ENCODE measurements at regions of chr14 and their contacts with region 1.

Region 1: GRCh38 chr14:50773632-50774541 is 57.1 kb downstream of the NIN start:
- DNase-seq: peak; percentile 33 to 63
- ATAC-seq: peak; percentile 88 to 93
- H3K4me3 ChIP-seq: no peak overlapping the region
- H3K27ac ChIP-seq: no peak overlapping the region
- H3K4me1 ChIP-seq: peaks cover 5% of the 10 kb centered on the region; the same call in 1 of the 3 replicates
- CTCF ChIP-seq: peak; percentile 74
- EP300 ChIP-seq: no peak
- POLR2A ChIP-seq: no peak
- RAD21 ChIP-seq: peak; percentile 73 to 84

Region 2: GRCh38 chr14:50599700-50600444 is 174.0 kb before region 1 on chr14:
- CTCF ChIA-PET with region 1: interaction called, 61 read pairs
- POLR2A ChIA-PET with region 1: no interaction called
- DNase-seq: peak; percentile 14 to 62
- ATAC-seq: peak; percentile 79 to 82; a peak in 4 of 6 replicates
- H3K4me3 ChIP-seq: peak overlapping the region; percentile 31; the same call in 2 of the 3 replicates
- H3K27ac ChIP-seq: peak overlapping the region; percentile 35 to 74; a peak in 5 of 6 replicates
- H3K4me1 ChIP-seq: peaks cover 20% of the 10 kb centered on the region
- CTCF ChIP-seq: peak; percentile 85
- EP300 ChIP-seq: no peak
- POLR2A ChIP-seq: no peak
- RAD21 ChIP-seq: peak; percentile 78 to 79

Region 3: DNA sequence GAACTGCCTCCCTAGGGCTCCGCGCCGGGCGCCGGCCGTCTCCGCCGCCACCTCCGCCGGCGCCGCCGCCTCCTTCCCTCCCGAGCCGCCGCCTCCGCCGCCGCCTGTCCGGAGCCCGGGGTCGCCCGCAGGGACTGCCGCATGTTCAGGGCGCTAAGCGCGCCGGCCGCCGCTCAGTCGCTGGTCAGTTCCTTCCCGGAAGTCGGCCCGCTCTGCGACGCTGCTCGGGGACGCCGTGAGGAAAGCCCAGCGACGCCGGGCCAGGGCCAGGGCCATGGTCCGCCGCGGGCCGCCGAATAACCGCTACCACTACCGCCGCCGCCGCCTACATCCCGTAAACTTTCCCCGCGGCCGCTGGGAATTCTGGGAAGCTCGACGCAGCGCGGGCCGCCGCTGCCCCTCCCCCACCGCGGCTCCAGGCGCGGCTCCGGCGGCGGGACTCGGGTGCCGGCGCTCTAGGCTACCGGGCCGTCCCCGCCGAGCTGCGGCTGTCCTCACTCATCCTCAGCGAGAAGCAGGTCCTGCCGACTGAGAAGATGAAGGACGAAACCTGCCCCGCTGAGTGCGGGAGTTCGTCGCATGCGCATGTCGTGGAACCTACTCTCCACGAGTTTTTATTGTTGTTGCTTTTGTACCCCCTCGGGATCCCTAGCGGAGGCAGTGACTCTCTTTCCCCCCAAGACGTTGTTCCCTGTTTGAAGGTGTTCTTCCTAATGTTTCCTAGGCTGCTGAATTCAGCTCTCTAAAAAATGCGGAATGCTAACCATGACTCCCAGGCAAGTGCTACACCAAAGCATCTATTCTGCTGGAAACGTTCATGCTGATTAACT is 105.7 kb before region 1 on chr14 and contains the start of gene SAV1:
- CTCF ChIA-PET with region 1: interaction called, 6 read pairs
- POLR2A ChIA-PET with region 1: interaction called, 20 read pairs
- DNase-seq: peak in 1 of 2 experiments; percentile 83
- ATAC-seq: peak; percentile 86 to 88
- H3K4me3 ChIP-seq: peak within 1 kb of the TSS; percentile 74
- H3K27ac ChIP-seq: peak within 1 kb of the TSS; percentile 87 to 96
- H3K4me1 ChIP-seq: peaks cover 16% of the 10 kb centered on the region
- CTCF ChIP-seq: 0 out of 3 replicates have a peak, but pooled peaks have one; percentile 10
- EP300 ChIP-seq: no peak
- POLR2A ChIP-seq: peak; percentile 92
- RAD21 ChIP-seq: no peak
- polyA plus RNA-seq, gene SAV1: 20.1 and 20.3 TPM in 2 replicates

Region 4: GRCh38 chr14:50785457-50786063 is 11.7 kb after region 1 on chr14:
- CTCF ChIA-PET with region 1: interaction called, 34 read pairs
- POLR2A ChIA-PET with region 1: no interaction called
- DNase-seq: no peak
- ATAC-seq: no peak
- H3K4me3 ChIP-seq: no peak overlapping the region
- H3K27ac ChIP-seq: no peak overlapping the region
- H3K4me1 ChIP-seq: no peaks in the 10 kb centered on the region
- CTCF ChIP-seq: no peak
- EP300 ChIP-seq: no peak
- POLR2A ChIP-seq: no peak
- RAD21 ChIP-seq: no peak

Region 5: GRCh38 chr14:50860478-50861086 is 86.7 kb after region 1 on chr14:
- CTCF ChIA-PET with region 1: interaction called, 60 read pairs
- POLR2A ChIA-PET with region 1: no interaction called
- DNase-seq: peak; percentile 78 to 87
- ATAC-seq: peak; percentile 65 to 80; a peak in 5 of 6 replicates
- H3K4me3 ChIP-seq: peak overlapping the region; percentile 47
- H3K27ac ChIP-seq: peak overlapping the region; percentile 60 to 76
- H3K4me1 ChIP-seq: 0 out of 3 replicates have a peak, but pooled peaks cover 3% of the 10 kb centered on the region
- CTCF ChIP-seq: peak; percentile 75
- EP300 ChIP-seq: no peak
- POLR2A ChIP-seq: no peak
- RAD21 ChIP-seq: peak; percentile 74 to 76

Region 6: GRCh38 chr14:50967790-50968189 is 193.9 kb after region 1 on chr14:
- CTCF ChIA-PET with region 1: no interaction called
- POLR2A ChIA-PET with region 1: no interaction called
- DNase-seq: no peak
- ATAC-seq: no peak
- H3K4me3 ChIP-seq: no peak overlapping the region
- H3K27ac ChIP-seq: 0 out of 6 replicates have a peak overlapping the region, but pooled peaks of 1 of the 2 experiments have one; percentile 23
- H3K4me1 ChIP-seq: peaks cover 23% of the 10 kb centered on the region
- CTCF ChIP-seq: no peak
- EP300 ChIP-seq: no peak
- POLR2A ChIP-seq: no peak
- RAD21 ChIP-seq: no peak

Region 7: DNA sequence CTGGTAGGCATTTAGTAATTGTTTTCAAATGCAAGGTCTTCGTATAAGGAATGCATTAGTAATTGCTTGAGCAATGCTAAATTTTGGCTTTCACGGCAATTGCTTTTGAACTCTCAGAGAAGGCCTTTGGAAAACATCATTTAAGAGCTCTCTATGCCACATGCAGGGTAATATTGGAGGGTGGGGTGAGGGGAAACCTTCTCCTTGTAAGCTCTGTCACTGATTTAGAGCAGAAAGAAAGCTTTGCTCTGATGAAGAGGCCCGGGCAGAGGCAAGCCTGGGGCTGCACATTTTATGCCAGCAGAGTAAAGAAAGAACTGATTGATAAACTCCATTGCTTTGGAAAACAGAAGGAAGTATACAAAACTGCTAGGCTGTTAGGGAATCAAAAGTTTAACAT is 250.1 kb after region 1 on chr14:
- CTCF ChIA-PET with region 1: no interaction called
- POLR2A ChIA-PET with region 1: no interaction called
- DNase-seq: no peak
- ATAC-seq: no peak
- H3K4me3 ChIP-seq: no peak overlapping the region
- H3K27ac ChIP-seq: no peak overlapping the region
- H3K4me1 ChIP-seq: no peaks in the 10 kb centered on the region
- CTCF ChIP-seq: no peak
- EP300 ChIP-seq: no peak
- POLR2A ChIP-seq: no peak
- RAD21 ChIP-seq: no peak

Measured in A549 (cell line).